ENCODE measurements at regions of chr17 and their contacts with region 1.

Region 1: DNA sequence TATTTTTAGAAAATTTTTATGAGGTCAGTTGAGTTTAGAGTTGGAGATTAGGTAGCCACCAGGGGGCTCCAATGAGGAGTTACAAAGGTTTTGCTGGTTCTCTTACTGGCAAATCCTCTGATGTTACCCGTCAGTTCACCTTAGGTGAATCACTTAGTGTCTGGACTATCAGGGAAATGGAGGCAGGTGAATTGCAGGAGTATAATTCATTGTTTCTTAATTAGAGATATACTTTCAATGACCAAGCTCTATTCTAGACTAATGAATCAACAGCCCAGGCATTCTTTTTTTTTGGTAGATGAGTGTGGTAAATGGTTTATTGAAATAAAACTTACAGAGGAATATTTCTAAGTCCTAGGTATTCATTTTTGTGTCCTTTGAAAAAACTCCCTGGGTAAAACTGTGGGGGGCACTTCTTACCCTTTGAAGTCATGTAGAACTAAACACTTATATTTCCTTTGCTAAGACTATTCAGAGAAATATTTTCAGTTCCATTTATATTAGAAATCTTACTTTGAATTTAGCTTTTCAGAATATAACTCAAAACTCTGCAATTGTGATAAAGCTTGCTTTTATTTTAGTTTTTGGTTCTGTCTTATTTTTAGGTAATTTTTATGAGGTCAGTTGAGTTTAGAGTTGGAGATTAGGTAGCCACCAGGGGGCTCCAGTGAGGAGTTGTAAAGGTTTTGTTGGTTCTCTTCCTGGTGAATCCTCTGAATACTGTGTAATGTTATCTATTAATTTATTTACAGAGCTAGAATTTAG is 17.7 kb downstream of the PSMD11 start:
- DNase-seq: peak; percentile 52
- H3K4me3 ChIP-seq: no peak overlapping the region
- H3K27ac ChIP-seq: no peak overlapping the region
- H3K4me1 ChIP-seq: no peaks in the 10 kb centered on the region
- H3K27me3 ChIP-seq: no peaks in the 10 kb centered on the region
- CTCF ChIP-seq: peak; percentile 72
- EP300 ChIP-seq: no peak
- RAD21 ChIP-seq: peak; percentile 38; the same call in 1 of the 2 replicates

Region 2: GRCh38 chr17:31754239-31754945 is 707.6 kb before region 1 on chr17:
- CTCF ChIA-PET with region 1: no interaction called
- POLR2A ChIA-PET with region 1: no interaction called
- DNase-seq: no peak
- H3K4me3 ChIP-seq: no peak overlapping the region
- H3K27ac ChIP-seq: no peak overlapping the region
- H3K4me1 ChIP-seq: no peaks in the 10 kb centered on the region
- H3K27me3 ChIP-seq: no peaks in the 10 kb centered on the region
- CTCF ChIP-seq: no peak
- EP300 ChIP-seq: no peak
- RAD21 ChIP-seq: no peak

Region 3: GRCh38 chr17:32311028-32311536 is 151.0 kb before region 1 on chr17:
- CTCF ChIA-PET with region 1: no interaction called
- POLR2A ChIA-PET with region 1: no interaction called
- DNase-seq: peak; percentile 72
- H3K4me3 ChIP-seq: no peak overlapping the region
- H3K27ac ChIP-seq: peak overlapping the region in 1 of 2 experiments; percentile 60; a peak in 1 of 4 replicates
- H3K4me1 ChIP-seq: peaks cover 0 to 4% of the 10 kb centered on the region in 2 experiments; a peak in 1 of 4 replicates
- H3K27me3 ChIP-seq: no peaks in the 10 kb centered on the region
- CTCF ChIP-seq: no peak
- EP300 ChIP-seq: no peak
- RAD21 ChIP-seq: no peak

Region 4: GRCh38 chr17:32444308-32445073 is 17.5 kb before region 1 on chr17 and contains the start of gene PSMD11:
- CTCF ChIA-PET with region 1: interaction called, 56 read pairs
- POLR2A ChIA-PET with region 1: interaction called, 3 read pairs
- DNase-seq: peak; percentile 99
- H3K4me3 ChIP-seq: peak within 1 kb of the TSS; percentile 82 to 96
- H3K27ac ChIP-seq: peak within 1 kb of the TSS; percentile 80 to 85
- H3K4me1 ChIP-seq: peaks cover 14% of the 10 kb centered on the region in 2 experiments; a peak in 3 of 4 replicates
- H3K27me3 ChIP-seq: no peaks in the 10 kb centered on the region
- CTCF ChIP-seq: no peak
- EP300 ChIP-seq: peak in 1 of 2 experiments; percentile 24; a peak in 1 of 4 replicates
- RAD21 ChIP-seq: no peak
- polyA plus RNA-seq, gene PSMD11: 63.1 and 81.9 TPM in 2 replicates

Region 5: GRCh38 chr17:32486111-32486700 is 24.2 kb after region 1 on chr17:
- CTCF ChIA-PET with region 1: interaction called, 102 read pairs
- POLR2A ChIA-PET with region 1: interaction called, 4 read pairs
- DNase-seq: peak; percentile 96
- H3K4me3 ChIP-seq: peak overlapping the region in 1 of 2 experiments; percentile 76; a peak in 3 of 4 replicates
- H3K27ac ChIP-seq: peak overlapping the region in 1 of 2 experiments; percentile 88; a peak in 2 of 4 replicates
- H3K4me1 ChIP-seq: peaks cover 0 to 51% of the 10 kb centered on the region in 2 experiments; a peak in 2 of 4 replicates
- H3K27me3 ChIP-seq: no peaks in the 10 kb centered on the region
- CTCF ChIP-seq: no peak
- EP300 ChIP-seq: no peak
- RAD21 ChIP-seq: no peak

Region 6: GRCh38 chr17:32755045-32755805 is 293.2 kb after region 1 on chr17:
- CTCF ChIA-PET with region 1: interaction called, 25 read pairs
- POLR2A ChIA-PET with region 1: no interaction called
- DNase-seq: peak; percentile 66
- H3K4me3 ChIP-seq: no peak overlapping the region
- H3K27ac ChIP-seq: no peak overlapping the region
- H3K4me1 ChIP-seq: no peaks in the 10 kb centered on the region; a peak in 1 of 4 replicates
- H3K27me3 ChIP-seq: no peaks in the 10 kb centered on the region
- CTCF ChIP-seq: peak; percentile 75
- EP300 ChIP-seq: no peak
- RAD21 ChIP-seq: peak; percentile 95

Region 7: GRCh38 chr17:32777436-32777835 is 315.4 kb after region 1 on chr17:
- CTCF ChIA-PET with region 1: interaction called, 18 read pairs
- POLR2A ChIA-PET with region 1: no interaction called
- DNase-seq: no peak
- H3K4me3 ChIP-seq: no peak overlapping the region
- H3K27ac ChIP-seq: no peak overlapping the region
- H3K4me1 ChIP-seq: no peaks in the 10 kb centered on the region; a peak in 1 of 4 replicates
- H3K27me3 ChIP-seq: no peaks in the 10 kb centered on the region
- CTCF ChIP-seq: no peak
- EP300 ChIP-seq: no peak
- RAD21 ChIP-seq: no peak

Measured in SK-N-SH (cell line).